Left ventricle myocardium inferior (tissue), 1 donor: ENCODE measurements at regions of chr11 and their contacts with region 1.

Region 1: DNA sequence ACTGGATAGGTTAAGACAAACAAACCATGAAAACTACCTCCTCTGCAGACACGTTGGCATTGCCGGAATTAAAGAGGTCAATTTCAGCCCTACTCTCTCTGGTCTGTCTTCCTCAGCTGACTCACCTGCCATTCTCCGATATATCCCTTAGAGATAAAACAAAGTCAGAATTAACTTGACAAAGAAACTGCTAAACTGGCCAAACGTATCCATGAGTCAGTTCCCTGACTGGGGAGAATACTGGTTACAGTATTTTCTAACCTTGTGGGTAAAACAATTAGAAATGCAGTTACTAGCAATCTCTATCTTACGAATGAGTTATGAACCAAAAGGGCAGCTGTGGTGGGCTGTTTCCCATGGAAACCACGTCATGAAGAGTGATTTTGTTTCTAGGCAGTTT is 96.2 kb downstream of the RDX start:
- DNase-seq: no peak
- H3K4me3 ChIP-seq: no peak overlapping the region
- H3K27ac ChIP-seq: no peak overlapping the region
- H3K4me1 ChIP-seq: no peaks in the 10 kb centered on the region
- H3K27me3 ChIP-seq: no peaks in the 10 kb centered on the region
- CTCF ChIP-seq: no peak

Region 2: DNA sequence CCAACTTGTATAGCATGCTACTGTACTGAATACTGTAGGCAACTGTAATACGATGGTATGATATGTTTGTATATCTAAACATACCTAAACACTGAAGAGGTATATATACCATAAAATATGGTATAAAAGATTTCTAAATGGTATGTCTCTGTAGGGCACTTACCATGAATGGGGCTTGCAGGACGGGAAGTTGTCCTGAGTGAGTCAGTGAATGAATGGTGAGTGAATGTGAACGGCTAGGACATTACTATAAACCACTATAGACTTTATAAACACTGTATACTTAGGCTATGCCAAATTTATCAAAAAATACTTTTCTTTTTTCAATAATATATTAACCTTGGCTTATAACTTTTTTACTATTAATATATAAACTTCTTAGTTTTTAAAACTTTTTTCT is 40.2 kb before region 1 on chr11:
- intact Hi-C with region 1: no loop called
- DNase-seq: no peak
- H3K4me3 ChIP-seq: no peak overlapping the region
- H3K27ac ChIP-seq: no peak overlapping the region
- H3K4me1 ChIP-seq: peaks cover 12% of the 10 kb centered on the region
- H3K27me3 ChIP-seq: no peaks in the 10 kb centered on the region
- CTCF ChIP-seq: no peak

Region 3: GRCh38 chr11:110366291-110366690 is 166.1 kb after region 1 on chr11:
- intact Hi-C with region 1: loop called (anchors 2 kb)
- DNase-seq: peak; percentile 60
- H3K4me3 ChIP-seq: no peak overlapping the region
- H3K27ac ChIP-seq: peak overlapping the region; percentile 30
- H3K4me1 ChIP-seq: peaks cover 37% of the 10 kb centered on the region
- H3K27me3 ChIP-seq: no peaks in the 10 kb centered on the region
- CTCF ChIP-seq: no peak

Region 4: GRCh38 chr11:110429731-110430266 is 229.6 kb after region 1 on chr11 and contains the start of gene FDX1:
- intact Hi-C with region 1: loop called (anchors 5 kb)
- DNase-seq: peak; percentile 82
- H3K4me3 ChIP-seq: peak within 1 kb of the TSS; percentile 90
- H3K27ac ChIP-seq: peak within 1 kb of the TSS; percentile 91
- H3K4me1 ChIP-seq: peaks cover 50% of the 10 kb centered on the region
- H3K27me3 ChIP-seq: no peaks in the 10 kb centered on the region
- CTCF ChIP-seq: peak; percentile 85
- total RNA-seq, gene FDX1: 26.3 TPM